WTC11 (cell line): ENCODE measurements at regions of chr5 and their contacts with region 1.

Region 1: DNA sequence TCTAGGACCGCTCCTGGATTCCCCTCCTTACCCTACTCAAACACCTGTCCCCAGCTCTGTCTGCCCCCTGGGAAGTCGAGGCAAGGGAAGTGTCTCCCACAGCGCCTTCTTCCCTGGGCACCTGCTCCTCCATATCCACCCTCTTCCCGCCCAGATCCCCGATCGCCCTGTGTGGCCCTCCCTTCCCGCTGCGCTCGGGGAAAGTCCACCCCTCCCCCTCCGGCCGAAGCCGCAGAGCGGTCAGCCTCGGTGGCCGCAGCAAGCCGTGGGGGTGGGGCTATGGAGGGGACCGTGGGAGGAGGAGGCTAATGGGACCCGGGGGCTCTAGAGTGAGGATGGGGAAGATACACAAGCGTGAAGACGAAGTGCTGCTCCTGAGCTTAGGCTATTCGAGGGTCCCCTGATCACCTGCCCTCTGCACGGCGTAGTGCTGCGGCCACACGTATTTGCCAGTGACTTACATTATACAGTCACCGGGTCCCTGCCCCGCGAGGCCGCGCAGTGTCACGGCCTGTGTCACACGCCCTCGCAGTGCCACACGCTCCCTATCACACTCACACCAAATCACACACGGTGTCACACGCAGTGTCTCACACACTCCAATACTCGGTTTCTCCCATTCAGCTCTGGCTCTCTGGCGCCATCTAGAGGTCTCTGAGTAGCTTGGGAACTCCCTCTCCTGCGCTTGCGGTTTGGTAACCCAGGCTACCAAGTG is 658 bp upstream of the PCDH1 start:
- DNase-seq: peak; percentile 90
- ATAC-seq: peak; percentile 30
- H3K4me3 Mint-ChIP-seq: peak overlapping the region; percentile 84
- H3K27ac Mint-ChIP-seq: peak overlapping the region; percentile 98
- H3K4me1 Mint-ChIP-seq: peaks cover 65% of the 10 kb centered on the region
- H3K27me3 Mint-ChIP-seq: peaks cover 6% of the 10 kb centered on the region; the same call in 1 of the 2 replicates
- CTCF ChIP-seq: peak; percentile 93

Region 2: DNA sequence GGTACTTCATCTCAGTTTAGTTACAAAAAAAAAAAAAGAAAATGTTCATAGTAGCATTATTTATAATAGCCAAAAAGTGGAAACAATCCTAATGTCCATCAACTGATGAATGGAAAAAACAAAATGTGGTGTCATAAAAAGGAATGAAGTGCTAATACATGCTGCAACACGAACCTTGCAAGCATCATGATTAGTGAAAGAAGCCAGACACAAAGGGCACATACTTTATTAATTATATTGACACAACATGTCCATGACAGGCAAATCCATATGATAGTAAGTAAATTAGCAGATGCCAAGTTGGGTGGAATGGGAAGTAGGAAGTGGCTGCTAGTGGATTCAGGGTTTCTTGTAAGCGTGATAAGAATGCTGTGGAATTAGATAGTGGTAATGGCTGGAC is 335.8 kb before region 1 on chr5:
- CTCF ChIA-PET with region 1: no interaction called
- POLR2A ChIA-PET with region 1: no interaction called
- DNase-seq: no peak
- ATAC-seq: no peak
- H3K4me3 Mint-ChIP-seq: no peak overlapping the region
- H3K27ac Mint-ChIP-seq: no peak overlapping the region
- H3K4me1 Mint-ChIP-seq: no peaks in the 10 kb centered on the region
- H3K27me3 Mint-ChIP-seq: no peaks in the 10 kb centered on the region
- CTCF ChIP-seq: no peak

Region 3: DNA sequence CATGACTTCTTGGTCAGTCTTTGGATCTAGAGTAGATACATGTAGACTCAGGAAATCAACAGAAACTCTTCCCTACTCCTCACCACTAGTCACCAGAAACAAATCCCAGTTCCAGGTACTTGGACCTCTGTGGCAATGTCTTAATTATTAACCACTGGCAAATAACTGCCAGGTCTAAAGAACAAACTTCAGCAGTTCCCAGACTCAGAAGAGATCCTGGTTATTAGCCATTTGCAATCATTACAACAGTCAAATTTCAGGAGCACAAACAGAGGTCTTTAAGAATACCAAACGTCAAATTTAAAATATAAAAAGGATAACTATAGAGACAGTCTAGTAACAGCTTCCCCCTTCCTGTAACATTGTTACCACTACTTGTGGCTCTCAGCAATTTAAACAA is 270.3 kb before region 1 on chr5:
- CTCF ChIA-PET with region 1: no interaction called
- POLR2A ChIA-PET with region 1: no interaction called
- DNase-seq: no peak
- ATAC-seq: no peak
- H3K4me3 Mint-ChIP-seq: no peak overlapping the region
- H3K27ac Mint-ChIP-seq: peak overlapping the region; percentile 6
- H3K4me1 Mint-ChIP-seq: peaks cover 30% of the 10 kb centered on the region
- H3K27me3 Mint-ChIP-seq: no peaks in the 10 kb centered on the region
- CTCF ChIP-seq: no peak

Region 4: DNA sequence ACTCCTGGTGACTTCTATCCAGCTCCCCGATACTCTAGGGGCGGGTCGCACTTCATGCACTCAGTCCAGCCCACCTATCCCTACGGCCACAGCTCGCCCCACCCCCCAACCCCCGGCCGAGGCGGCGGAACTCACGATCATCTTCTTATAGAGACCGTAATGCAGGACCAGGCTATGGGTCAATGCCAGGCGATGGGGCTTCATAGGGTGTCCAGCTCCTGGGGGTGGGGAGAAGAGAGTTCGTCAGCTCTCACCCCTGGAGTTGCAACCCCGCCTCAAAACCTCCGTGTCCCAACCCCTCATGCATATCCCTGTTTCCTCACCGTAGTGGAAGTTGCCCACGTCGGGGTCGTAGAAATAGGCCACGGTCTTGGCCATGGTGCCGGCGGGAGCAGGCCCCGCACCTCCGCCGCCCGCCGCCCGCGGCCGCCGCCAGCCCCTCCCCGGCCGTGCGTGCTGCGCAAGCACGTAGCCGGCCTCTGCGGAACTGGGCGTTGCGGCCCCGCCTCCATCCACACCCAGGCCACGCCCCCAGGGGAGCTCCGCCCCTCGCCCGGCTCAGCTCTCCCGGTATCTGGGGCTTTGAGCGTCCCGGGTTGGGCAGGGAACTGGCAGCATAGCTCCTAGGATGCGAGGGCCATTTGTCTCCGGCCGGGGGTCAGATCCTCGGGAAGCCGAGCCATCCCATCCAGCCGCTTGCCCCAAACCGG is 242.3 kb before region 1 on chr5 and contains the starts of genes HDAC3 and RELL2:
- CTCF ChIA-PET with region 1: interaction called, 15 read pairs
- POLR2A ChIA-PET with region 1: interaction called, 6 read pairs
- DNase-seq: peak; percentile 97
- ATAC-seq: peak; percentile 82
- H3K4me3 Mint-ChIP-seq: peak within 1 kb of the TSS; percentile 90
- H3K27ac Mint-ChIP-seq: peak within 1 kb of the TSS; percentile 90
- H3K4me1 Mint-ChIP-seq: peaks cover 22% of the 10 kb centered on the region
- H3K27me3 Mint-ChIP-seq: no peaks in the 10 kb centered on the region
- CTCF ChIP-seq: no peak
- total RNA-seq, gene HDAC3: 84.7 to 96.2 TPM (median 94.5 TPM) in 3 replicates
- total RNA-seq, gene RELL2: 19.3 to 23.8 TPM (median 21.4 TPM) in 3 replicates

Region 5: DNA sequence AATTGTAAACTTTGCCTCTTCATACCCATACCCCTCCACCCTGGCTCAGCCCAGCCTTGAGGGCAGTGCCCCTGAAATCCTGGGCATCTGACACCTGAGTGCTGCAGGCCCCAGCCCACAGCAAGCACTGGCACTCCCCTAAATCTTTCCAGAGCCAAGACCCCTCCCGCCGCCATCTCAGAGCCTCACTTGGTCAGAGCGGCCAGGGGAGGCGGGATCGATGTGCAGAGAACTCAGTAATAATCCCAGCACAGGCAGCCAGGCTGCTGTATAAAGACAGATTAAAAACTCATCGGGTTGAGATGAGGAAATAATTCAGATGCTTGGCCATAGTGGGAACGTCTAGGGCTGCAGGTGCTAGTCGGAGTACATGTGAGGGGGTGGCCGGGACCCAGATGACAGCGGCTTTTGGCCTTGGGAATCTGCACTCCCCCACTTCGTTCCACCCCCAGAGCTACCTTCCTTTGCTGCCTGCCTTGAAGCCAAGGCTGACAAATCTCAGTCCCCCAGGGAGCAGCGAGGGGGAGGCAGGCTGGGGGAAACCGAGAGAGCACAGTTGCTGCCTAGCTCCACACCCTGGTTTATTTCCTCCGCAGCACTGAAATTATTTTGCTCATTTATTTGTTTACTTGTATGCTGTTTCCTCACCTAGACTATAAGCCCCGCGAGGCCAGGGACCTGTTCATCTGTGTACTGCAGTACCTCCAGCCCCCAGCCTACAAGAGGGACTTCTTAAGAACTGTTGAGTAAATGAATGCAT is 177.3 kb before region 1 on chr5:
- CTCF ChIA-PET with region 1: interaction called, 116 read pairs
- POLR2A ChIA-PET with region 1: interaction called, 4 read pairs
- DNase-seq: no peak
- ATAC-seq: no peak
- H3K4me3 Mint-ChIP-seq: no peak overlapping the region; the same call in 1 of the 2 replicates
- H3K27ac Mint-ChIP-seq: no peak overlapping the region
- H3K4me1 Mint-ChIP-seq: peaks cover 22% of the 10 kb centered on the region
- H3K27me3 Mint-ChIP-seq: peaks cover 6% of the 10 kb centered on the region
- CTCF ChIP-seq: no peak

Region 6: DNA sequence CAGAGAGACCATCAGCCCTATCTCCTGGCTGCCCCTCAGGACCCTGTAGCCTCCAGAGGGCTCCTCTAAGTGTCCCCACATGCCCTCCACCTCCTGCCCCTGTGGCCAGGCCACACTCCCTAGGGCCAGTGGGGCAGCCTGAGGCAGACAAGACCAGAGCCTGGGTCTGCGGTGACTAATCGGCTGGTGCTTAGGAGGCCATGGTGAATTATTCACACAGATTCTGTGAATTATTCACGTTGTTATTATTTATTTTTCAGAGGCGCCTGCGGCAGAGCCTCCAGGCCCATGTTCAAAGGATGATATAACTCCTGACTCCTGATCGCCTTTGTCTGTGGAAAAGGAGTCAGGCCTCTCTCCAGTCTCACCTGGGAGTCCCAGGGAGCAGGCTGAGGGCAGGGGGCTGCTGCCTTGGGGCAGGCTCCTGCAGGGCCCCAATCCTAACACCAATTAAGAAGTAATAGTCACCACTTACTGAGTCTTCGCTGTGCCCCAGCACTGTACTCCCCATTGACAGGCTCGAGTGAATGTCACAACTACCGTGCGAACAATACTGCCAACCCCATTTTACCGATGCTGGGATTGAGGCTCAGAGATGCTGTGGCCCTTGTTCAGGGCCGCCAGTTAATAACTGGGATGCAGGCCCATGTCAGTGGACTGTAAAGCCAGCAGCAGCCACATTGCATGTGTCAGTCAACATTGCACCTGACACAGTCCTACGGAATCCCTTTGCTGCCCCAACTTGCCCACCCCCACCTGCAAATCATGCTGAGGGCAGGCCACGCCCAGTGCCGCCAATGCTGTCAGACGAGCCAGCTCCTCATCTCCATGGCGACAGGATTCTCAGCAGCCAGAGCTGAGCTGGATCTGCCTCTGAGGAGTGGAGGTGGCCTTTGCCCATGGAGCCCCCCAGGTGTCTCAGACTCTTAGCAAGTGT is 95.6 kb before region 1 on chr5:
- CTCF ChIA-PET with region 1: interaction called, 28 read pairs
- POLR2A ChIA-PET with region 1: interaction called, 4 read pairs
- DNase-seq: peak; percentile 48
- ATAC-seq: peak; percentile 29
- H3K4me3 Mint-ChIP-seq: no peak overlapping the region
- H3K27ac Mint-ChIP-seq: no peak overlapping the region
- H3K4me1 Mint-ChIP-seq: peaks cover 43% of the 10 kb centered on the region
- H3K27me3 Mint-ChIP-seq: no peaks in the 10 kb centered on the region
- CTCF ChIP-seq: no peak

Region 7: DNA sequence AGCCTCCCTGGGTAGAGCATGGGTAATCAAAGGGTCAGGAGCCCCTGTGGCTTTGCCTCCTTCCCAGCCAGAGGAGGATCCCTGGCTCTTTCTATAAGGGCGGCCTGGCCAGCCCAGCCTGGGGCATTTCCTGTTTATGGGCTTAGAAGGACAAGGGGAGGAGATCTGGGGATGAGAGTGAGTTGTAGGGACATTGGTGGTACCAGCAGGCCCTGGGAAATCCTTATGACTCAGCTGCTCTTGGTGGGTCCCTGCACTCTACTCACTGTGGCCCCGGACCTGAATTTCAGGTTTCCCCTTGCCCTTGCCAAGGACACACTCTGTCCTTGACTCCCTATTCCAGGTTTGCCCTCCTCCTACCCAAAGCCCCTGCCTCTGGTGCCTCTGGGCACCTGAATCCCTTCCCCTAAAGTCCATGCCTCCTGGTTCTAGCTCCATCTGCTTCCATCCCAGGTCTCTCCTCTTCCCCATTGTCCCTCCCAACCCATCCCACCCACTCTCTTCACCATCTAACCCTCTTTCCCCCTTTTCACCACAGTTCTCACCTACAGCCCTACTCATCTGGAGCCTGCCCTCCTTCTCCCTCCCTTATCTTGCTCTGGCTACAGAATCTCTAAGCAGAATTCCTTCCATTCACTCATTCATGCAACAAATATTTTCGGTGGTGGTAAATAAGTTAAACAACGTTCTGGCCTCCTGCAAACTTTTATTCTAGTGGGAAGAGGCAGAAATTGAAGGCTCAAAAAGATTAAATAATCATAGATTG is 35.5 kb before region 1 on chr5:
- CTCF ChIA-PET with region 1: interaction called, 83 read pairs
- POLR2A ChIA-PET with region 1: interaction called, 42 read pairs
- DNase-seq: no peak
- ATAC-seq: peak; percentile 5
- H3K4me3 Mint-ChIP-seq: peak overlapping the region; percentile 13; the same call in 1 of the 2 replicates
- H3K27ac Mint-ChIP-seq: peak overlapping the region; percentile 100
- H3K4me1 Mint-ChIP-seq: peaks cover 97% of the 10 kb centered on the region
- H3K27me3 Mint-ChIP-seq: no peaks in the 10 kb centered on the region
- CTCF ChIP-seq: no peak

Region 8: GRCh38 chr5:141914199-141914743 is 35.4 kb after region 1 on chr5:
- CTCF ChIA-PET with region 1: interaction called, 74 read pairs
- POLR2A ChIA-PET with region 1: interaction called, 4 read pairs
- DNase-seq: peak; percentile 77
- ATAC-seq: peak; percentile 79
- H3K4me3 Mint-ChIP-seq: peak overlapping the region; percentile 66
- H3K27ac Mint-ChIP-seq: no peak overlapping the region
- H3K4me1 Mint-ChIP-seq: peaks cover 29% of the 10 kb centered on the region
- H3K27me3 Mint-ChIP-seq: peaks cover 27% of the 10 kb centered on the region
- CTCF ChIP-seq: no peak

Region 9: DNA sequence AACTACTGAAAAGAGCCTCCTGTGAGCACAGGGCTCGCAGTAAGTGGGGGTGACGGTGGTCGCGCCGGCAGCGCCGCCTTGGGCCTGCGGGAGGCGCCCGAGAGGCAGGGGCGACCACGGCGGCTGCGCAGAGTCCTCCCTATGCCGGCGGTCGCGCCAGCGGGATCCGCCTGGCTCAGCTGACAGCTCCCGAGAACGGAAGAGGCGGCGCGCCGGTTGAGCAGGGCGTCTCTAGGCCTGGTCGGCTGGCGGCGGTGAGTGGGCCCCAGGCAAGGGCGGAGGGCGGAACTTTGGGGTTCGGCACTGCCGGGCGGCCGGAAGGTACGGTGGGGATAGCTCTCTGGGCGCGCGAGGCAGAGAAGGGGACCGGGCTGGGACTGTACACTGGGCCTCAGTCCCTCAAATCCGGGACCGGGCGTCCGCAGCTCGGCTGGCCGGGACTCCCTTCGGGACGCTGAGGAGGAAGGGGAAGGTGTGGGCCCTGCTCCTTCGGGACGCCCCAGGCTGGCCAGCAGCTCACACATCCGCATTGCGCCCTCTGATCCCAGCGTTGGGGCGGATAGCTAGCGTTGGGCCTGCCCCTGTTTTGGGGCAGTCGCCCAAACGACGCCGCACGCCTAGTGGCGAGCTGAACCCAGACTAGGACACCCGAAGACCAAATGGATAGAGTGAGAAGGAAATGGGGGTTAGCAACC is 90.2 kb after region 1 on chr5 and contains the start of gene RNF14:
- CTCF ChIA-PET with region 1: interaction called, 46 read pairs
- POLR2A ChIA-PET with region 1: interaction called, 6 read pairs
- DNase-seq: peak; percentile 95
- ATAC-seq: peak; percentile 96
- H3K4me3 Mint-ChIP-seq: peak within 1 kb of the TSS; percentile 80
- H3K27ac Mint-ChIP-seq: peak within 1 kb of the TSS; percentile 92
- H3K4me1 Mint-ChIP-seq: peaks cover 19% of the 10 kb centered on the region
- H3K27me3 Mint-ChIP-seq: no peaks in the 10 kb centered on the region
- CTCF ChIP-seq: peak; percentile 98
- total RNA-seq, gene RNF14: 17.0 to 22.6 TPM (median 20.5 TPM) in 3 replicates

Region 10: GRCh38 chr5:142017832-142018427 is 139.1 kb after region 1 on chr5:
- CTCF ChIA-PET with region 1: no interaction called
- POLR2A ChIA-PET with region 1: no interaction called
- DNase-seq: no peak
- ATAC-seq: no peak
- H3K4me3 Mint-ChIP-seq: no peak overlapping the region
- H3K27ac Mint-ChIP-seq: no peak overlapping the region
- H3K4me1 Mint-ChIP-seq: peaks cover 9% of the 10 kb centered on the region
- H3K27me3 Mint-ChIP-seq: peaks cover 5% of the 10 kb centered on the region; the same call in 1 of the 2 replicates
- CTCF ChIP-seq: no peak

Region 11: DNA sequence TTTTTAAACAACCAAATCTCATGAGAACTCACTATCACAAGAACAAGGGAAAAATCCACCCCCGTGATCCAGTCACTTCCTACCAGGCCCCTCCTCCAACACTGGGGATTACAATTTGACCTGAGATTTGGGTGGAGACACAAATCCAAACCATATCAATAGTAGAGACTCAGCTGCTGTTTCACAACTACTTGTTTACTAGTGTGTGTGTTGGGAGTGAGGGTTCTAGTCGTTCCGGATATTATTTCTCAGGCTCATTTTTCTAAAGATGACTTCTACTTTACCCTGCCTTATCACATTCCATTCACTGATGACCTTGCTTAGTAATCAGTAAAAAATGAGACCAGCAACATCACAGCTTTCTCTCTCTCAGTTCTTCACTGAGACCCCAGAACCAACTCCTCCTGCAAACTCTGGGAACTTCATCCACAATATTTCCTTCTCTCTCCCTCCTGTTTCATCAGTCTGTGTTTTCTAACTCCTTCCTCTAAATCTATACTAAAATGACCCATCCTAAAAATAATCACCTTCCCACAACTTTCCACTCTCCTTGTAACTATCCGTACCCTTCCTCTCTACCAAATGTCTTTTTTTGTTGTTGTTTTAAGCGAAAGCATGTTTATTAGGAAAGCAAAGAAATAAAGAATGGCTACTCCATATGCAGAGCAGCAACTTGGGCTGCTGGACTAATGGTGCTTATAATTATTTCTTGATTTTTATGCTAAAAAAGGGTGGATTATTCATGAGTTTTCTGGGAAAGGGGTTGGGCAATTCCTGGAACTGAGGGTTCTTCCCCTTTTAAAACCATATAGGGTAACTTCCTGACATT is 567.5 kb after region 1 on chr5:
- CTCF ChIA-PET with region 1: no interaction called
- POLR2A ChIA-PET with region 1: no interaction called
- DNase-seq: no peak
- ATAC-seq: no peak
- H3K4me3 Mint-ChIP-seq: no peak overlapping the region
- H3K27ac Mint-ChIP-seq: peak overlapping the region; percentile 7; the same call in 1 of the 2 replicates
- H3K4me1 Mint-ChIP-seq: peaks cover 14% of the 10 kb centered on the region
- H3K27me3 Mint-ChIP-seq: no peaks in the 10 kb centered on the region
- CTCF ChIP-seq: no peak